Activated CD4-positive, alpha-beta T cell treated with anti-CD3 and anti-CD28 coated beads, Interleukin-2, amount 10 ng/mL, durations not matched to agents 24 days and 14 days (primary cell): ENCODE measurements at regions of chr5 and their contacts with region 1.

Region 1: DNA sequence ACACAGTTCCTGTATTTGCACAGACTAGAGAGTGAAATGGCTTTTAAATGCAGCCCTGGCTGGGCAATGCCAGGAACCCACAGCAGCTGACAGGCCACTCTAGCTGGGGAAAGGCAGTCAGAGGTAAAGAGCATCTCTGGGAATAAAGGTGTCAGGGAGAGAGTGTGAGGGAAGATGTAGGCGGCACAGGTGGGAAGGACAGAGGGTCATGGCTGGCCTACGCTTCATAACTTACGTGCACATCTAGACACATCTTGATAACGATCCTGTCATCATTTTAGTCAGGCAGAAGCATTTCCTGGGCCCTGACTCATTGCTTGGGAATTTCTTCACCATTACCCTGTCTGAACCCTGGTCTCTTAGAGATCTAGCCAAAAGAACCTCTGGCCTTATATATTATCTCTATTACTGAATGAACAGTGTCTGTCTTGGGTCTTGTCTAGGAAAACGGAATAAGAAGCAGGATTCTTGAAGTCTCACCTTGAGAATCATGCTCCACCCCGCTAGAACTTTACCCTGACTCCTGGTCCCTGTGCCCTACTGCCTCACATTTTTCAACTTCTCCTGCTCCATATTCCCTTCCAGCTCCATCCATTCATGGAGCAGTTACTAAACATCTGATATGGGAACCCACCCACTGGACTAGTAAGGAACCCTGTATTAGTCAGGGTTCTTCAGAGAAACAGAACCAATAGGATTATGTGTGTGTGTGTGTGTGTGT is 106.4 kb upstream of the ELL2 start:
- DNase-seq: peak; percentile 65
- H3K4me3 Mint-ChIP-seq: peak overlapping the region; percentile 40
- H3K27ac Mint-ChIP-seq: peak overlapping the region; percentile 90
- H3K4me1 Mint-ChIP-seq: peaks cover 59% of the 10 kb centered on the region
- H3K27me3 Mint-ChIP-seq: no peaks in the 10 kb centered on the region

Region 2: DNA sequence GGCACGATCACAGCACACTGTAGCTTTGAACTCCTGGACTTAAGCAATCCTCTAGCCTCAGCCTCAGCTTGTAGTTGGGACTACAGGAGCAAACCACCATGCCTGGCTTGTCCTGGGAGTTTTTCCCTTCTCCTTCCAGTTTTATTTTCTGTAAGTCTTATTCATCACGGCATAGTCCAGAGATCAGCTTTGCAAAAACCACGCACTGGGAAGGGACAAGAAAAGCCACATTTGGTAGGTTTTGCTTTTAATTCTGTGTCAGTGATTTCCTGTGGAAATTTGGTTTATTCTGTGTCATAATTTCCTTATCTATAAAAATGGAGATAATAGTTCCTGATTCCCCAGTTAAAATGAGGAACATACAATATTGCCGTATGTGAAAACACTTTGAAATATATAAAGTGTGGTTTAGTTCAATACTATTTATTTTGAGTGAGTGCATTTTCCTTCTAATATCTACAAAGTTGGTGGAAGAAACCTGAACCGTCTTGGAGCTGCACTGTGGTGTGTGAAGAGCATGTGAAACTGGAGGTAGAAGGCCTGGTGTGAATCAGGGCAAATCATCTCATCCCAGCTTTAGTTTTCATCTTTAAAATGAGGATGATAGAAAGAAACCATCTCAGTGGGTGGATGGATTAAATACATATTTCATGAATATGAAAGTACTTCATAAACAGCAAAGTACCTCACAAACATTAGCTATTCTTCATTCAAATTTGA is 13.6 kb before region 1 on chr5:
- intact Hi-C with region 1: loop called (anchors 1 kb)
- DNase-seq: no peak
- H3K4me3 Mint-ChIP-seq: peak overlapping the region; percentile 7
- H3K27ac Mint-ChIP-seq: peak overlapping the region; percentile 65
- H3K4me1 Mint-ChIP-seq: peaks cover 10% of the 10 kb centered on the region
- H3K27me3 Mint-ChIP-seq: no peaks in the 10 kb centered on the region

Region 3: GRCh38 chr5:96079075-96079474 is 11.0 kb after region 1 on chr5:
- intact Hi-C with region 1: loop called (anchors 1 kb)
- DNase-seq: no peak
- H3K4me3 Mint-ChIP-seq: peak overlapping the region; percentile 42
- H3K27ac Mint-ChIP-seq: peak overlapping the region; percentile 87
- H3K4me1 Mint-ChIP-seq: peaks cover 45% of the 10 kb centered on the region
- H3K27me3 Mint-ChIP-seq: no peaks in the 10 kb centered on the region

Region 4: GRCh38 chr5:96113170-96113939 is 45.3 kb after region 1 on chr5:
- intact Hi-C with region 1: loop called (anchors 1 kb)
- DNase-seq: peak; percentile 59
- H3K4me3 Mint-ChIP-seq: no peak overlapping the region
- H3K27ac Mint-ChIP-seq: peak overlapping the region; percentile 76
- H3K4me1 Mint-ChIP-seq: peaks cover 11% of the 10 kb centered on the region
- H3K27me3 Mint-ChIP-seq: no peaks in the 10 kb centered on the region

Region 5: GRCh38 chr5:96220610-96221390 is 152.7 kb after region 1 on chr5:
- intact Hi-C with region 1: loop called (anchors 2 kb)
- DNase-seq: no peak
- H3K4me3 Mint-ChIP-seq: no peak overlapping the region
- H3K27ac Mint-ChIP-seq: peak overlapping the region; percentile 60
- H3K4me1 Mint-ChIP-seq: peaks cover 2% of the 10 kb centered on the region
- H3K27me3 Mint-ChIP-seq: no peaks in the 10 kb centered on the region

Region 6: GRCh38 chr5:96279801-96280542 is 211.9 kb after region 1 on chr5:
- intact Hi-C with region 1: loop called (anchors 10 kb)
- DNase-seq: no peak
- H3K4me3 Mint-ChIP-seq: peak overlapping the region; percentile 53
- H3K27ac Mint-ChIP-seq: peak overlapping the region; percentile 77
- H3K4me1 Mint-ChIP-seq: peaks cover 22% of the 10 kb centered on the region
- H3K27me3 Mint-ChIP-seq: peaks cover 6% of the 10 kb centered on the region

Region 7: GRCh38 chr5:97735209-97735608 is 1667.2 kb after region 1 on chr5:
- intact Hi-C with region 1: no loop called
- DNase-seq: no peak
- H3K4me3 Mint-ChIP-seq: no peak overlapping the region
- H3K27ac Mint-ChIP-seq: no peak overlapping the region
- H3K4me1 Mint-ChIP-seq: no peaks in the 10 kb centered on the region
- H3K27me3 Mint-ChIP-seq: no peaks in the 10 kb centered on the region